ENCODE measurements at regions of chr2 and their contacts with region 1.

Region 1: GRCh38 chr2:11753886-11754699 is 7.7 kb downstream of the LPIN1 start:
- DNase-seq: peak; percentile 88
- H3K4me3 Mint-ChIP-seq: peak overlapping the region; percentile 70
- H3K27ac Mint-ChIP-seq: peak overlapping the region; percentile 97
- H3K4me1 Mint-ChIP-seq: peaks cover 94% of the 10 kb centered on the region
- H3K27me3 Mint-ChIP-seq: no peaks in the 10 kb centered on the region

Region 2: GRCh38 chr2:10659898-10660568 is 1094.1 kb before region 1 on chr2:
- CTCF ChIA-PET with region 1: no interaction called
- intact Hi-C with region 1: loop called (anchors 10 kb)
- DNase-seq: peak; percentile 69
- H3K4me3 Mint-ChIP-seq: no peak overlapping the region
- H3K27ac Mint-ChIP-seq: no peak overlapping the region
- H3K4me1 Mint-ChIP-seq: peaks cover 19% of the 10 kb centered on the region
- H3K27me3 Mint-ChIP-seq: no peaks in the 10 kb centered on the region

Region 3: DNA sequence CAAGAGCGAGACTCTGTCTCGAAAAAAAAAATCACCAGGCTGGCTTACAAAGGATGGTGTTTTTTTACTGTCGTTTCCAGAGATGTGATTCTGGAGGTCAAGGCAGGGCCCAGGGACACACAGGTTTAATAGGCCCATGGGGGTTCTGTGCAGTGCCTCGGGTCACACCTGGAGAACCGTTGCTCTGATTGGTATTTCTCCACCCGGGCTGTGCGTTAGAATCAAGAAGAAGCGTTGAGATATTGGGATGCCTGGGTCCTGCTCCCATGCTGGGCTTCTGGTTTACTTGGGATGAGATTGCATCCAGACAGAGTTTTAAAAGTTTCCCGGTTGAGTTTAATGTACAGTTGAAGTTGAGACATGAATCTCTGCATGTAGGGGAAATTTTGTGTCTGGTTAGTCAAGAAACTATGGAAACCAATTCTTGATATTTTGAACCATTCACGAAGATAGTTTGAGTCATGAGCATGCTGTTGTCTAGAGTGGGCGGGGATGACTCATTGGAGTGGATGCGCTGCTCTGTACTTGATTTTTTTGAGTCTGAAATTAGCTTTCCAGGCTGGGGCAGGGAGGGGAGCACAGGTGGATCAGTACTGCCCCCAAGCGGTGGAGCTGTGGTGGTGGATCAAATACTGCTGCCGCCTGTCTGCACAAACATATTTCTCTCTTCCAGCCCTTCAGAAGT is 170.1 kb before region 1 on chr2:
- CTCF ChIA-PET with region 1: interaction called, 3 read pairs
- intact Hi-C with region 1: loop called (anchors 1 kb)
- DNase-seq: peak; percentile 96
- H3K4me3 Mint-ChIP-seq: no peak overlapping the region
- H3K27ac Mint-ChIP-seq: peak overlapping the region; percentile 6
- H3K4me1 Mint-ChIP-seq: peaks cover 19% of the 10 kb centered on the region
- H3K27me3 Mint-ChIP-seq: peaks cover 6% of the 10 kb centered on the region

Region 4: GRCh38 chr2:11743846-11744553 is 10.1 kb before region 1 on chr2:
- CTCF ChIA-PET with region 1: interaction called, 18 read pairs
- intact Hi-C with region 1: loop called (anchors 1 kb)
- DNase-seq: peak; percentile 92
- H3K4me3 Mint-ChIP-seq: no peak overlapping the region
- H3K27ac Mint-ChIP-seq: peak overlapping the region; percentile 69
- H3K4me1 Mint-ChIP-seq: peaks cover 47% of the 10 kb centered on the region
- H3K27me3 Mint-ChIP-seq: no peaks in the 10 kb centered on the region

Region 5: GRCh38 chr2:11784747-11785610 is 30.9 kb after region 1 on chr2:
- CTCF ChIA-PET with region 1: interaction called, 169 read pairs
- intact Hi-C with region 1: no loop called
- DNase-seq: peak; percentile 44
- H3K4me3 Mint-ChIP-seq: no peak overlapping the region
- H3K27ac Mint-ChIP-seq: no peak overlapping the region
- H3K4me1 Mint-ChIP-seq: no peaks in the 10 kb centered on the region
- H3K27me3 Mint-ChIP-seq: no peaks in the 10 kb centered on the region

Region 6: DNA sequence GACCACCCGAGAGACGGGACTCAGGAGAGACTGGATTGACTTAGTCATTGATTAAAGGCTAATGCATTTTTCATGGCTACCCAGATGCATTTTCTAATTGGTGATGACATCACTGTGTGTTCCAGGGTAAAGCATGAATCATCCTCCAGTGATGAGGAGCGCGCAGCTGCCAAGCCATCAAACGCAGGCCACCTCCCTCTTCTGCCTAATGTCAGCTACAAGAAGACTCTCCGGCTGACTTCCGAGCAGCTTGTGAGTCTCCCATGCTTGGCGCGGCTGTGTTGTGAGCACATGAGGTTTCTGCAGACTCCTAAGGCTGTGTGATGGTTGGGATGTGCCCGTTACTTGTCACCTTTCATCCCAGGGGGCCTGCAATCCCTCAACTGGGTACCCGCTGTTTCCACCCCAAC is 48.7 kb after region 1 on chr2:
- CTCF ChIA-PET with region 1: no interaction called
- intact Hi-C with region 1: no loop called
- DNase-seq: no peak
- H3K4me3 Mint-ChIP-seq: no peak overlapping the region
- H3K27ac Mint-ChIP-seq: no peak overlapping the region
- H3K4me1 Mint-ChIP-seq: peaks cover 2% of the 10 kb centered on the region
- H3K27me3 Mint-ChIP-seq: no peaks in the 10 kb centered on the region

Region 7: GRCh38 chr2:11842336-11842735 is 88.2 kb after region 1 on chr2:
- CTCF ChIA-PET with region 1: no interaction called
- intact Hi-C with region 1: no loop called
- DNase-seq: no peak
- H3K4me3 Mint-ChIP-seq: no peak overlapping the region
- H3K27ac Mint-ChIP-seq: no peak overlapping the region
- H3K4me1 Mint-ChIP-seq: no peaks in the 10 kb centered on the region
- H3K27me3 Mint-ChIP-seq: peaks cover 4% of the 10 kb centered on the region

Region 8: DNA sequence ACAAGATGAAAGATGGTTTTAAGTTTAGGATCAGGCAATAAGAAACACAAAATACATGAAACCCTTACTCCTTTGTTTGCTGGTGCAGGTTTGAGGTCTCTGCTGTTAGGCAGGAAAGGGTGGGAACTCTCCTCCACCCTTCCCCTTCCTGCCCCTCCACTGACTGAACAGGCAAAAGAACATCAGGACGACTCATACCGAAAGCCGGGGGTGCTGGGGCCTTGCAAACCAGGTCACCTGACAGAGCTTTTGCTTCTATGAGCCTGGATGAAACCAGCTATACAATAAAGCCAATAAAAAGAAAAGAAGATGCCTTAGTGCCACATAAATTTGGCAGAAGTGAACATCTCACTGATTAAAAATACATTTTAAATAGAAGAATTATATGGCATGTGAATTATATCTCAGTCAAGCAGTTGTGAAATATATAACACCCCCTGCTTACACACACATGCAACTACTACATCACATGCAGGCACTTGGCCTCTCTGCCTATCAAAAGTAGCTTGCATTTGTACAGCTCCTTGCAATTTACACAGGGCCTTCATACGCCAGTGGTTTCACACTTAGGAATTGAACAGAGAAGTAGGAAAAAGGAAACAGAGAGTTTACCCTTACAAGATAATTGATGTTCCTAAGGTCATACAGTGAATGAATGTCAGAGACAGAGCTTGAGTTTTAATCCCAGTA is 747.5 kb after region 1 on chr2:
- CTCF ChIA-PET with region 1: no interaction called
- intact Hi-C with region 1: loop called (anchors 5 kb)
- DNase-seq: peak; percentile 88
- H3K4me3 Mint-ChIP-seq: no peak overlapping the region
- H3K27ac Mint-ChIP-seq: peak overlapping the region; percentile 47
- H3K4me1 Mint-ChIP-seq: peaks cover 91% of the 10 kb centered on the region
- H3K27me3 Mint-ChIP-seq: no peaks in the 10 kb centered on the region

Measured in activated naive CD4-positive, alpha-beta T cell treated with anti-CD3 and anti-CD28 coated beads for 36 hours (primary cell).